ENCODE measurements at regions of chr9 and their contacts with region 1.

Region 1: DNA sequence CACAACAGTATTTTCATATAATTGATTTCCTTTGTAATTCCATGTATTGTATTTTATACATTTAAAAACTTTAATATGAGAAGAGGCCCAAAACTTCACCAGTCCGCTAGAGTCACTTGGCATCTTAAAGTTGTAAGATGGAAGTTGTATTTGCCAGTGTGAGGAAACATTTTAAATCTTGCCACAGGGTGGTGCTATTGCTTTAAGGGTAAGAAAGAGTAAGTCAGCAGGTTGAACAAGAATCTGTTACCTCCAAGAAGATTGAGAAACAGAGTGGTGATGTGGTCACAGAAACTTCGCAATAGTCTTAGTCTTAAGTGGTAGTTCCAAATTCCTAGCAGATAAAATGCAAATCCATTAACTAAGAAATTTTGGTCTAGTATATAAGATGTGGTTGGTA is 39.8 kb upstream of the RANBP6 start:
- DNase-seq: peak; percentile 85
- H3K4me3 ChIP-seq: no peak overlapping the region
- H3K27ac ChIP-seq: no peak overlapping the region
- H3K4me1 ChIP-seq: peaks cover 12% of the 10 kb centered on the region
- H3K27me3 ChIP-seq: no peaks in the 10 kb centered on the region
- CTCF ChIP-seq: peak; percentile 66

Region 2: GRCh38 chr9:5799314-5799713 is 255.9 kb before region 1 on chr9:
- CTCF ChIA-PET with region 1: interaction called, 7 read pairs
- POLR2A ChIA-PET with region 1: no interaction called
- intact Hi-C with region 1: loop called (anchors 2 kb)
- DNase-seq: peak; percentile 59
- H3K4me3 ChIP-seq: no peak overlapping the region
- H3K27ac ChIP-seq: no peak overlapping the region
- H3K4me1 ChIP-seq: no peaks in the 10 kb centered on the region
- H3K27me3 ChIP-seq: no peaks in the 10 kb centered on the region
- CTCF ChIP-seq: peak; percentile 78

Region 3: DNA sequence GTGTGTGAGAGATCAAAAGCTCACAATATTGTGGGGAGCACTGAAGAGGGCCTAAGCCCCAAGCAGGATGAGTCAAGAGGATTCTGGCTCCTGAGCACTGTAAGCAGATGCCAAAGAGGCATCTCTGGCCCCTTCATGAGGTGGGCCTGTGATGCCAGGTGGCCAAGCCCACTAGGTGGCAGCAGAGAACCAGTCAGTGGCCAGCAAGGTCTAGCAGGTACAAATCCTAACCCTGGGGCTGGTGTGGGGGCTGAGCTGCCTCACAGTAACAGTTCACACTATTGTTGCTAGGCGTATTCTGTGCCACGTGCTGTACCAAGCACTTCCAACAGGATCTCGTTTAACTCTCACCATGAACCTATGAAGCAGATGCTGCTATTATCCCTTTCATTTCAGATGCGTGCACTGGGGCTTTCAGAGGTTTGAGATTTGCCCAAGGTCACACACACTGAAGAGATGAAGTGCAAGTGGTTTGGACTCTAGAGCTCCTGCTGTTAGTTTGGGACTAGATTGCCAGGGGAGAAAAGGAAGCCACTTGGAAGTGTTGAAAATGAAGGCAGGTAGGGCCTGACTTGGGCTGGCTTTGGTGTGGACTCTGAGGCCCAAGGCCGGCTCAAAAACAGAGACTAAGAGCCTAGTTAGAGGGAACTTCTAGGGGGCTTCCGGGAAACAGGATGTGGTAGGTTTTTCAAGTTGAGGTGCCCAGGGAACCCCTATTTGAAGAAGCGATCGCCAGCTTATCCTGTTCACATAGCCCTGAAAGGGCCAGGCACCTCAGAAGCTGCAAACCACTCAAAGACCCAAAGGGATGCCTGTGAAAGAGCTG is 168.9 kb before region 1 on chr9:
- CTCF ChIA-PET with region 1: interaction called, 16 read pairs
- POLR2A ChIA-PET with region 1: no interaction called
- intact Hi-C with region 1: loop called (anchors 1 kb)
- DNase-seq: peak; percentile 80
- H3K4me3 ChIP-seq: no peak overlapping the region
- H3K27ac ChIP-seq: no peak overlapping the region
- H3K4me1 ChIP-seq: no peaks in the 10 kb centered on the region
- H3K27me3 ChIP-seq: peaks cover 21% of the 10 kb centered on the region
- CTCF ChIP-seq: peak; percentile 96

Region 4: GRCh38 chr9:6305954-6306563 is 250.8 kb after region 1 on chr9:
- CTCF ChIA-PET with region 1: interaction called, 16 read pairs
- POLR2A ChIA-PET with region 1: no interaction called
- intact Hi-C with region 1: loop called (anchors 2 kb)
- DNase-seq: peak; percentile 65
- H3K4me3 ChIP-seq: no peak overlapping the region
- H3K27ac ChIP-seq: no peak overlapping the region
- H3K4me1 ChIP-seq: no peaks in the 10 kb centered on the region
- H3K27me3 ChIP-seq: peaks cover 10% of the 10 kb centered on the region
- CTCF ChIP-seq: peak; percentile 65

Region 5: DNA sequence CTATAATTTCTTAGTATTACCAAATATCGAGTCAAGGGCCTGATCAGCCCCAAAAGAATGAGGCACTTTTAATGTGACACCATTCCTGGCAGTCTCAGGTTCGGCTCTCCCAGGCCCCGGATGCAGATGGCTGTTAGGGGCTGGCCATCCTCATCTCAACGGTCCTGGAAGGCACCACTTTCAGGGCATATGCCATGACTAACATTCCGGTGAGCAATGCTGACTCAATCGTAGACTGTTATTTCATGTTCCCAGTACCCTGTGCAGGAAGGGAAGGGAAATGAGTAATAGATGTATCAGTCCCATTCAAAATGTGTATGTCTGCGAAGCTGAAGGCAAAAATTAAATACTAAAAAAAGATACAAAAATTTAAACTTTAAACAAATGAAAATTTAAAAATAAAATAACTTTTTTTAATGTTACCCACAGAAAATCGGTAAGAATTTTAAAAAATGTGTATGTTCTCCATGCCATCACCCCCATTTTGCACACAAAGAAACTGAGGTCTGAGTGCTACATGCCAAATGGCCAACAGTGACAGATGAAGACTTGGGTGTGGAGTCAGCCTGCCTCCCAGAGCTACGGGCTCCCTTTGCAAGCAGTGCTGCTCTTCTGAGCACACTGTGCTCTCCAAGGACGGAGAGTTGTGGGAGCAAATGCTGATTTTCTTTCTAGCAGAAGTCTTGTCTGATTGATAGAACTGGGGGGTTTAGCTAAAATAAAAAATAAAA is 511.4 kb after region 1 on chr9:
- CTCF ChIA-PET with region 1: no interaction called
- POLR2A ChIA-PET with region 1: no interaction called
- intact Hi-C with region 1: loop called (anchors 5 kb)
- DNase-seq: peak; percentile 49
- H3K4me3 ChIP-seq: no peak overlapping the region
- H3K27ac ChIP-seq: no peak overlapping the region
- H3K4me1 ChIP-seq: no peaks in the 10 kb centered on the region
- H3K27me3 ChIP-seq: no peaks in the 10 kb centered on the region
- CTCF ChIP-seq: no peak

Region 6: GRCh38 chr9:6667633-6668280 is 612.5 kb after region 1 on chr9:
- CTCF ChIA-PET with region 1: no interaction called
- POLR2A ChIA-PET with region 1: no interaction called
- intact Hi-C with region 1: loop called (anchors 2 kb)
- DNase-seq: peak; percentile 49
- H3K4me3 ChIP-seq: no peak overlapping the region
- H3K27ac ChIP-seq: no peak overlapping the region
- H3K4me1 ChIP-seq: no peaks in the 10 kb centered on the region
- H3K27me3 ChIP-seq: no peaks in the 10 kb centered on the region
- CTCF ChIP-seq: peak; percentile 67